PC-9 (cell line): ENCODE measurements at regions of chr12 and their contacts with region 1.

Region 1: GRCh38 chr12:54324617-54325441 is at the start of gene COPZ1:
- DNase-seq: peak; percentile 88 to 100
- H3K4me3 ChIP-seq: peak within 1 kb of the TSS; percentile 93
- H3K27ac ChIP-seq: peak within 1 kb of the TSS; percentile 92
- H3K4me1 ChIP-seq: peaks cover 37% of the 10 kb centered on the region
- H3K27me3 ChIP-seq: no peaks in the 10 kb centered on the region
- CTCF ChIP-seq: peak; percentile 92
- total RNA-seq, gene COPZ1: 232 and 265 TPM in 2 replicates

Region 2: DNA sequence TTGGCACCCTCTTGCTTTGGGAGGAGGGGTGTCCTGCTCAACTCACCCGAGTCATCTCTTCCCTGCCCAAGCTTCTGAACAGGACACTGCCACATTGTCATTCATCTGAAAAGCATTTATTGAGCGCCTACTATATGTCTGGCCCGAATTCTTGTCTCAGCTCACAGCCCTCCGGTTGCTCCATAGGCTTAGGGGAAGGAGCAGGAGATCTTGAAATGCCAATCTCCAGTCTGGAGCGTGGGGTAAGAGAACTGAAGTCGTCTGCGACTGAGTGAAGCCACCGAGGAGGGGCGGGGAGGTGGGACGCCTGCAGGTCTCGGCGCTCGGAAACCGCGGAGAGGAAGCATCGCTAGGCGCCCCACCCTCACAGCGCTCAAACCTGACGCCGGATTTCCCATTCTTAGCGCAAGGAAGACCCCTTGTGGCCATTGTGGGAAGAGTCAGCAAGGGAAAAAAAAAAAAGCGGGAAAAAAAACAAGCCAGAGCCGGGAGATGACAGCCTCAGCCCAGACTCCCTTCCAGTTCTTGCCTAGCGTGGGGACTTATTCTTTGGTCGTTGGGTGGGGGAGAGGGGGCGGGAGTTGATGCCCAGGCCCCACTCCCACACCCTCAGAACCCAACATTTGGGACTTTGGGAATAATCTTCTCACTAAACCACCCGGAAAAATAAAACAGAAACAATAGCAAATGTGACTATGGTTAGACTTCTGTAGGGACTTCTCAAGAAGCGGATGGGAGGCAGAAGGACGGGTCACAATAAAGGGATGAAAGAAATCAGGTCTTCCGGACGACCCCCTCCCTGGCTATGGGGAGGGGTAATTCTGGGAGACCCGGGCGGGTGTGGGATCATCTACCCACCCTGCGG is 107.8 kb before region 1 on chr12:
- CTCF ChIA-PET with region 1: interaction called, 3 read pairs
- POLR2A ChIA-PET with region 1: interaction called, 10 read pairs
- intact Hi-C with region 1: no loop called
- DNase-seq: peak; percentile 62 to 74
- H3K4me3 ChIP-seq: peak overlapping the region; percentile 49; the same call in 1 of the 2 replicates
- H3K27ac ChIP-seq: no peak overlapping the region
- H3K4me1 ChIP-seq: peaks cover 4% of the 10 kb centered on the region
- H3K27me3 ChIP-seq: no peaks in the 10 kb centered on the region
- CTCF ChIP-seq: peak; percentile 89

Region 3: DNA sequence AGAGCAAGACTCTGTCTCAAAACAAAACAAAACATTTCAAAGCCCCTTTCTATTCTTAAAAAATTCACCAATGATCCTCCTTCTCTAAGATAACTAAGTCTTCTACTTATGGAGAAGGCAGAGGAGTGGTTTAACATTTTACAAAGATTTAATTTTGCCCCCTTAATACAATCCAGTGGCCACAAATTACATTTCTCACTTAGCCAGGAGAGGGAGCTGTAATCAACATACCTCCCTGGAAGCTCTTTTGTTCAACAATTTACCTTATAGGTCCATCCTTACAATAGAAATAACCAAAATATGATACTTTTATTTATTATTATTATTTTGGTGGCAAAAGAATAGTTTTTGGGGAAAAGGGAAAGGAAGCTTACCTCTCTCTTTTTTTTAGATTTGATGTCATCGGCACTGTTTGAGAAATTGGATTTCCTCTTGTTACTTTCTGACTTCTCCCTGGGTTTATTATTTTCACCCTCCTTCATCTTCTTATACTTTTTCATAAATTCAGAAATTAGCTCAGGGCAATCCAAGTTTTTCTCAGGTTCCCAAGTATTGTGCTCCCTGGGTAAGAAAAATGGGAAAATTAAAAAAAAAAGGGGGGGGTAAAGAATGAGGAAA is 73.1 kb before region 1 on chr12:
- CTCF ChIA-PET with region 1: interaction called, 15 read pairs
- POLR2A ChIA-PET with region 1: interaction called, 13 read pairs
- intact Hi-C with region 1: loop called (anchors 2 kb)
- DNase-seq: no peak
- H3K4me3 ChIP-seq: no peak overlapping the region
- H3K27ac ChIP-seq: no peak overlapping the region
- H3K4me1 ChIP-seq: no peaks in the 10 kb centered on the region
- H3K27me3 ChIP-seq: no peaks in the 10 kb centered on the region
- CTCF ChIP-seq: peak; percentile 74

Region 4: GRCh38 chr12:54279866-54280467 is 44.9 kb before region 1 on chr12 and contains the start of gene CBX5:
- CTCF ChIA-PET with region 1: interaction called, 12 read pairs
- POLR2A ChIA-PET with region 1: interaction called, 39 read pairs
- intact Hi-C with region 1: loop called (anchors 1 kb)
- DNase-seq: peak; percentile 96 to 98
- H3K4me3 ChIP-seq: peak within 1 kb of the TSS; percentile 82
- H3K27ac ChIP-seq: peak within 1 kb of the TSS; percentile 94
- H3K4me1 ChIP-seq: peaks cover 38% of the 10 kb centered on the region
- H3K27me3 ChIP-seq: no peaks in the 10 kb centered on the region
- CTCF ChIP-seq: no peak
- total RNA-seq, gene CBX5: 108 and 154 TPM in 2 replicates

Region 5: DNA sequence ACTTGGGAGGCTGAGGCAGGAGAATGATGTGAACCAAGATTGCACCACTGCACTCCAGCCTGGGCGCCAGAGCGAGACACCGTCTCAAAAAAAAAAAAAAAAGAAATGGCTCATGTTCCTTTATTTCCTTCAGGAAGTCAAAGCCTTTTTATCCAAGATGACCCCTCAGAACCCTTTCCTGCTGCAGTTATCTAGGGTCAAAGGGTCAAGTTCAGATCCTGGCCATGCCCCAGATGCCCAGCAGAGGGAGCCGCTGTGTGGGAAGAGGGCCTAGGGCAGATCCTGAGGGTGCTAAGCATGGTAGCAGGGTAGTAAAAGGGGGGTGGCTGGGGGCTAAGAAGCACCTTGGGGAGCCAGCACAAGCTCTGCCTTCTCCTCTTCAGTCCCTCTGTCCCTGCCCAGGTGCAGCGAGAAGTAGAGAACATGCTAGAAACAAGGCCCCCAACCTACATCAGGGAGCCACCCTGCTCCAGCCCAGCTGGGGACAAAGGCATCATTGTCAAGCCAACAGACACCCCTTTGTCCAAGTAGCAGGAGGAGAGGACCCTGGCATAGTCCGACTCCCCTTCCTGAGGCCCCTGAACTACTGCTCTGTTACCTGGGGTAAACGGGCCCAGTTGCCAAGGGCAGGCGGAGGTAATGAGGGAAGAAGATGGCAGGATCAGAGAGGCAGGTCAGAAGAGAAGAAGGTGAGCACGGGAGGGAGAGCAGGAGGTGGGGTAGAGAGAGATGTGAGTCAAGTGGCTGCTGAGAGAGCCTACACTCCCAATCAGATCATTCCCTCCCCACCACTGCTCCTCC is 30.5 kb before region 1 on chr12:
- CTCF ChIA-PET with region 1: interaction called, 33 read pairs
- POLR2A ChIA-PET with region 1: interaction called, 4 read pairs
- intact Hi-C with region 1: loop called (anchors 1 kb)
- DNase-seq: peak in 1 of 2 experiments; percentile 54
- H3K4me3 ChIP-seq: no peak overlapping the region
- H3K27ac ChIP-seq: no peak overlapping the region
- H3K4me1 ChIP-seq: peaks cover under 1% of the 10 kb centered on the region; the same call in 1 of the 2 replicates
- H3K27me3 ChIP-seq: no peaks in the 10 kb centered on the region
- CTCF ChIP-seq: peak; percentile 93

Region 6: DNA sequence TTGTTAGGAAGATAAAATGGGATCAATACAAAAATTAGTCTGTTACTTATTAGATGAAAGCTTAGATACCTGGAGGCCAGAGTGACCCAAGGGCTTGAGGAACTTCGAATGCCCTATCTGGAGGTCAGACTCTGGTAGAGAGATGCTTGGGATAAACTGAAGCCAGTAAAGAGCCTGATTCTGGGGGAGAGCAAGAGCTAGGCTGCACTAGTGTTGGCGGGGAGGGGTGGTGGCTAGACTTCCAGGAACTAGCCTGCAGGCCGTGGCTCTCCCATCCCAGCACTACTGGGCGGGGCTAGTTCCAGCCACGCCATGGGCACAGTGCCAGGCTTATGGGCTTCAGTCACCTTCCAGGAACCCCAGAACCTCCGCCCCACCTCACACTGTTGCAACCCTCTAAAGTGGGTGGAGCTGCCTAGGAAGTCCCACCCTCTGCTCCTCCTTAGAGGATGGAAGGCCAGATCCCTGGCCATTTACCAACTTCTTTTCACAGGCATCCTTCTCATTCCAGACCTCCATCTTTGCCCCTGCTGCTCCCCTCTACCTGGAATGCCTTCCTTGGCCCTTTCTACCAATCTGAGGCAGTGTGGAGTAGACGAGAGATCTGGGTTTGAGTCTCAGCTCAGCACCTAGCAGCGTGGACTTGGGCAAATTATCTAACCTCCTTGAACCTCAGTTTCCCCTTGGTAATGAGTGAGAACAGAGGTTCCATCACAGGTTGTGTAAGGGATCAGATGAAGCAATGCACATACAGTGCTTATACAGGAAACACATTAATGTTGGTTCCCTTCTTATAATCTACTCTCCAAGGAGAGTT is 17.7 kb before region 1 on chr12:
- CTCF ChIA-PET with region 1: interaction called, 11 read pairs
- POLR2A ChIA-PET with region 1: interaction called, 6 read pairs
- intact Hi-C with region 1: no loop called
- DNase-seq: peak; percentile 92 to 97
- H3K4me3 ChIP-seq: no peak overlapping the region
- H3K27ac ChIP-seq: no peak overlapping the region
- H3K4me1 ChIP-seq: peaks cover 34% of the 10 kb centered on the region
- H3K27me3 ChIP-seq: no peaks in the 10 kb centered on the region
- CTCF ChIP-seq: no peak

Region 7: DNA sequence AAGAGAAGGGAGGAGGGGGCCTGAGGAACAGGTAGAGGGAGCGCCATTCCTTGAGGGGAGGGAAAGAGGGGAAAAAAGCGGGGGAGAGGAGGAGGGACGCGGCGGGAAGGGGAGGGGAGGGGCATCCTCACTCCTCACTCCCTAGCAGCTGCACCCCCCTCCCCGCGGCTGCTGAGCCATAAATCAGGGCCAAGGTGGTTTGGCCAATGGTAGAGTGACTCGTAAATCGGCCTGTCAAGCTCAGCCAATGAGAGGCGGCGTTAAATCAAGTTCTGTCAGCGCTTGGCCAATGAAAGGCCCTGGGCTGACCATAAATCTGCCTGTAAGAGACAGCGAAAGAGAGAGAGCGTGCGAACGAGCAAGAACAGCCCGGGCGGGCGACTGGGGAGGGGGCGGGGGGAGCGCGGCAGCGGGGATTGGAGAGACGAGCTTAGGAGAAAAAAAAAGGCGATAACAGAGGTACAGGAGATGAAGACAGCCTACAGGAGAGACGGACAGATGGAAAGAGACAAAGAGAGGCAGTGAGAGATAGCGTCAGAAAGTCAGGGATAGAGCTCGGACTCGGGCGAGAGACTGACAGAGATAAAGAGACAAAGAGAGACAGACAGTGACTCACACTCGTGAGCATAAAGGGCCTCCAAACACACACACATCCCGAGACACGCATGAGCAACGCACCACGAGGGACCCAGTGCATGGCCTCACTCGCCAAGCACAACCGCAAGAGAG is 34.4 kb after region 1 on chr12:
- CTCF ChIA-PET with region 1: interaction called, 17 read pairs
- POLR2A ChIA-PET with region 1: no interaction called
- intact Hi-C with region 1: no loop called
- DNase-seq: peak; percentile 94 to 98
- H3K4me3 ChIP-seq: peak overlapping the region; percentile 85
- H3K27ac ChIP-seq: peak overlapping the region; percentile 28; the same call in 1 of the 2 replicates
- H3K4me1 ChIP-seq: peaks cover 14% of the 10 kb centered on the region
- H3K27me3 ChIP-seq: no peaks in the 10 kb centered on the region
- CTCF ChIP-seq: no peak

Region 8: GRCh38 chr12:55057481-55057880 is 732.7 kb after region 1 on chr12:
- CTCF ChIA-PET with region 1: no interaction called
- POLR2A ChIA-PET with region 1: no interaction called
- intact Hi-C with region 1: no loop called
- DNase-seq: no peak
- H3K4me3 ChIP-seq: no peak overlapping the region
- H3K27ac ChIP-seq: no peak overlapping the region
- H3K4me1 ChIP-seq: no peaks in the 10 kb centered on the region
- H3K27me3 ChIP-seq: peaks cover 21% of the 10 kb centered on the region
- CTCF ChIP-seq: no peak